ENCODE measurements at regions of chr13 and their contacts with region 1.

Region 1: GRCh38 chr13:100088644-100089464 is at the start of gene PCCA:
- DNase-seq: peak; percentile 95
- H3K4me3 Mint-ChIP-seq: peak within 1 kb of the TSS; percentile 84
- H3K27ac Mint-ChIP-seq: peak within 1 kb of the TSS; percentile 69
- H3K4me1 Mint-ChIP-seq: peaks cover 26% of the 10 kb centered on the region
- H3K27me3 Mint-ChIP-seq: no peaks in the 10 kb centered on the region
- CTCF ChIP-seq: no peak
- total RNA-seq, gene PCCA: 20.6 and 23.4 TPM in 2 replicates

Region 2: GRCh38 chr13:99980201-99980823 is 108.5 kb before region 1 on chr13:
- CTCF ChIA-PET with region 1: no interaction called
- POLR2A ChIA-PET with region 1: interaction called, 21 read pairs
- intact Hi-C with region 1: no loop called
- DNase-seq: peak; percentile 81
- H3K4me3 Mint-ChIP-seq: peak overlapping the region; percentile 73
- H3K27ac Mint-ChIP-seq: no peak overlapping the region
- H3K4me1 Mint-ChIP-seq: peaks cover 4% of the 10 kb centered on the region
- H3K27me3 Mint-ChIP-seq: no peaks in the 10 kb centered on the region
- CTCF ChIP-seq: no peak

Region 3: DNA sequence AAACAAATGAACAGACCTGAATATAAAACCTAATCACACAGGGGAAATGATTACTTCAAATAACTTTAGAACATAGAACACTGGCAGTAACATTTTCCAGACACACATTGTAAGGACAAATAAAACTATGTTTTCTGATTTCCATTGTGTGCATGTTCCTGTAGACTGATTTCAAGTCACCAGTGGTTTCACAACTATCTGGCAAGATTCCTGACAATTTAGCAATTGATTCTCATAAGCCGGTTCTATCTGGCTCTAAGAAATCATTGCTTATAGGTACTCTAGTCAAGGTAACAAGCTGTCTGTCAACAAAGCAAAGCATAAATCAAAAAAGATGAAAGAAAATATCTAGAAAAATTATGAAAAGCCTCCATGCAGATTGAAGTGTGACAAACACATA is 19.6 kb before region 1 on chr13:
- CTCF ChIA-PET with region 1: interaction called, 3 read pairs
- POLR2A ChIA-PET with region 1: interaction called, 13 read pairs
- intact Hi-C with region 1: no loop called
- DNase-seq: peak; percentile 87
- H3K4me3 Mint-ChIP-seq: no peak overlapping the region
- H3K27ac Mint-ChIP-seq: peak overlapping the region; percentile 58
- H3K4me1 Mint-ChIP-seq: peaks cover 11% of the 10 kb centered on the region
- H3K27me3 Mint-ChIP-seq: no peaks in the 10 kb centered on the region
- CTCF ChIP-seq: no peak

Region 4: GRCh38 chr13:100108913-100109507 is 20.2 kb after region 1 on chr13:
- CTCF ChIA-PET with region 1: interaction called, 6 read pairs
- POLR2A ChIA-PET with region 1: interaction called, 20 read pairs
- intact Hi-C with region 1: no loop called
- DNase-seq: no peak
- H3K4me3 Mint-ChIP-seq: no peak overlapping the region
- H3K27ac Mint-ChIP-seq: no peak overlapping the region
- H3K4me1 Mint-ChIP-seq: no peaks in the 10 kb centered on the region
- H3K27me3 Mint-ChIP-seq: no peaks in the 10 kb centered on the region
- CTCF ChIP-seq: no peak

Region 5: GRCh38 chr13:100235311-100235901 is 146.6 kb after region 1 on chr13:
- CTCF ChIA-PET with region 1: interaction called, 4 read pairs
- POLR2A ChIA-PET with region 1: interaction called, 6 read pairs
- intact Hi-C with region 1: loop called (anchors 2 kb)
- DNase-seq: peak; percentile 75
- H3K4me3 Mint-ChIP-seq: peak overlapping the region; percentile 26
- H3K27ac Mint-ChIP-seq: no peak overlapping the region
- H3K4me1 Mint-ChIP-seq: peaks cover 14% of the 10 kb centered on the region
- H3K27me3 Mint-ChIP-seq: no peaks in the 10 kb centered on the region
- CTCF ChIP-seq: peak; percentile 68

Region 6: GRCh38 chr13:100290165-100290801 is 201.4 kb after region 1 on chr13:
- CTCF ChIA-PET with region 1: no interaction called
- POLR2A ChIA-PET with region 1: no interaction called
- intact Hi-C with region 1: no loop called
- DNase-seq: no peak
- H3K4me3 Mint-ChIP-seq: no peak overlapping the region
- H3K27ac Mint-ChIP-seq: peak overlapping the region; percentile 17
- H3K4me1 Mint-ChIP-seq: no peaks in the 10 kb centered on the region
- H3K27me3 Mint-ChIP-seq: no peaks in the 10 kb centered on the region
- CTCF ChIP-seq: no peak

Region 7: DNA sequence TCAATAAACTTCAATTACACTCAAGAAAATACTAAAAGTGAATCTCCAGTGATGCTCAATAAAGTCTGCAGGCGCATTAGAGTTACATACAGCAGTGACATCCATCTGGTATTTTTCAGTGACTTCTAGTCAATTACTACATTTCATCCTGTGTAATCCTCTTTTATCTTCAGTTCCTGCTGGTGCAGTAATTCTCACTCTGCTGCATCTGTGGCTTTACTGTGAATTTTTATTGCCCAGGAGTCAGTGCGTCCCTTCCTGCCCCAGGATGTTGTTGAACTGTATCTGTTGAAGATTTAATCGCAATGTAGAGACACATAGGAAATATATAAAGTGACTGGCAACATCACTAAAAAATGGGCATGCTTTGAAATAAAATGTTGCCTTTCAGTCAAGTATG is 782.0 kb after region 1 on chr13:
- CTCF ChIA-PET with region 1: no interaction called
- POLR2A ChIA-PET with region 1: no interaction called
- intact Hi-C with region 1: no loop called
- DNase-seq: no peak
- H3K4me3 Mint-ChIP-seq: no peak overlapping the region
- H3K27ac Mint-ChIP-seq: no peak overlapping the region
- H3K4me1 Mint-ChIP-seq: peaks cover 10% of the 10 kb centered on the region
- H3K27me3 Mint-ChIP-seq: no peaks in the 10 kb centered on the region
- CTCF ChIP-seq: no peak